Activated T-helper 1 cell treated with anti-CD3 and anti-CD28 coated beads, Interleukin-12 subunit alpha, Interleukin-12 subunit beta, Interleukin-2, Interleukin-4 antibody, amounts not matched to agents 30 ng/mL and 10 ng/mL and 1 ng/mL, durations not matched to agents 14 hours and 24 hours and 36 hours (primary cell): ENCODE measurements at regions of chr6 and their contacts with region 1.

Region 1: DNA sequence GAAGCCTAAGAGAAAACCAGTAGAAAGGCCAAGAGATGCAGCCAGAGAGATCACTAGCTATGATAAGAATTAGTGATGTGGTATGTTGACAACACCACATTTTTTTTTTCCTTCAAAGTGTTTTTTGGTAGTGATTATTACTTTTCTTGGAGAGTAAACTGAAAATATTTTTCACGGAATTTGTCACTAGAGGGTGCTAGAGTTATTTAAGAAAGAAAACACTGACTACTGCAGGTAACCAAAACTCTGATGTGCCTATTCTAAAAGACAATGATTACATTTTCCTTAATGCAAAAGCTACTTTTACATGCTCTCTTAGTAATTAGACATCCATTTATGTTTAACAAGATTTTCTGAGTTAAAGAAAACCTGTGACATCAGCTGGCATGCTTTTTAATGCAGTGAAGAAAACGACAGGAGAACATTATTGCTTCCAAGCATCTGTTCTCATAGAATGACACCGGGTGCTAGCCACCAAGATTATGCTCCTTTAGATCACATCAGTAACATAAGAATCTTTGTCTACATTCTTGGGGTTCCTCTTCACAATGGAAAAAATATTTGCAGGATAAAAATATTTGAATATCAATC is 28.8 kb downstream of the RWDD2A start:
- DNase-seq: no peak
- H3K4me3 Mint-ChIP-seq: no peak overlapping the region
- H3K27ac Mint-ChIP-seq: no peak overlapping the region
- H3K4me1 Mint-ChIP-seq: no peaks in the 10 kb centered on the region
- H3K27me3 Mint-ChIP-seq: peaks cover 2% of the 10 kb centered on the region

Region 2: DNA sequence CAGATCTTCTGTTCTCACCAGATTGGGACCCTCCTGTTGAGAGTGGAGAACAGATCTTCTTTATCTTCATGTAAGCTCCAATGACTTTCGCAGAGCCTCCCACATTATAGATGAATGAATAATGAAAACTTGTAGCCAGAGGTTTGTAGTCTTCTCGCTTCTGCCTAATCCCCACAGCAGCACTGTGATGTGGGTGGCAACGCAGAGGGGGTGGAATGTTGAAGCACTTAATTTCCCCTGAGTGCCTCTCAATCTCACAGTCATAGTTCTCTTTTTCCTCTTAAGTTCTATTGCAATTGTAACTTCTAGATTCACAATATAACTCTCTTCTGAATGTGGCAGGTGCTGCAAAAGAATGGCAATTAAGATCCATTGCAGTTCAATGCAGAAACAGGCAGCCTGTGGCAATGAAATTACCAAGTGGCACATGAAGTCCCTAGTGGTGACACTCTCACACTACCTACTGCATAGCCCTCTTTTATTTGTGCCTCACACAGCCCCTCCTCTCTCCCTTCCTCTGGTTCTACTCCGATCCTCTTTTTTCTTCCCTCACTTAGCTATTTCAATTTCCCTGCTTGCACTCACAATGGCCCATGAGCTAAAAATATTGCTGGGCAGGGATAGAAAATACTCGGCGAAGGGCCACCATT is 438.3 kb before region 1 on chr6:
- intact Hi-C with region 1: no loop called
- DNase-seq: no peak
- H3K4me3 Mint-ChIP-seq: no peak overlapping the region
- H3K27ac Mint-ChIP-seq: no peak overlapping the region
- H3K4me1 Mint-ChIP-seq: no peaks in the 10 kb centered on the region
- H3K27me3 Mint-ChIP-seq: no peaks in the 10 kb centered on the region

Region 3: GRCh38 chr6:83514866-83515466 is 293.0 kb after region 1 on chr6:
- intact Hi-C with region 1: loop called (anchors 1 kb)
- DNase-seq: no peak
- H3K4me3 Mint-ChIP-seq: no peak overlapping the region
- H3K27ac Mint-ChIP-seq: no peak overlapping the region
- H3K4me1 Mint-ChIP-seq: peaks cover 9% of the 10 kb centered on the region
- H3K27me3 Mint-ChIP-seq: peaks cover 41% of the 10 kb centered on the region

Region 4: DNA sequence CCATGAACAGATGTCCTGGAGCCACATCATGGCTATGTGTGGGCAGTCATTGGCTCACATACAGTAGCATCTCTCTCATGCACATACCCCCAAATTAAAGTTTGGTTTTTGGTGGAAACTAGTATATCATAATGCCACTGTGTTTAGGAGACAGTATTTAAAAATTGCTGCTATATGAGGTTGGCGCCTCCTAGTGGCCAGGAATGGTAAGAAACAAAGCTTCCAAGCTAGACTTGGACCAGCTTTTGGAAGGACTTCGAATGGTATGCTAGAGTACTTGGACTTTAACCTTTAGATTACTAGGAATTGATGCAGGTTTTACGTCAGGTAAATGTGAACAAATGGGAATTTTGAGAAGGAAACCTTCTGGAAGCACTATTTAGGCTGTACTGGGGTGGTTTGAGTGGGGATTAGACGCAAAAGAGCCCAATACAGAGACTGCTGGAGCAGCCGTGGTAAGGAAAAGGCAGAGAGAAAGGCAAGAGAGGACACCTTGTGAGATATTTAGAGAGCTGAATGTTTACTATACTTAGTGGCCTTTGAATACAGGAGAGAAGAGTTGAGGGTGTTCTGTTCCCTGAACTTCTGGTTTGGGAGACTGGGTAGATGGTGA is 314.2 kb after region 1 on chr6:
- intact Hi-C with region 1: loop called (anchors 1 kb)
- DNase-seq: peak; percentile 6
- H3K4me3 Mint-ChIP-seq: no peak overlapping the region
- H3K27ac Mint-ChIP-seq: no peak overlapping the region
- H3K4me1 Mint-ChIP-seq: no peaks in the 10 kb centered on the region
- H3K27me3 Mint-ChIP-seq: peaks cover 2% of the 10 kb centered on the region